A673 (cell line): ENCODE measurements at regions of chr2 and their contacts with region 1.

Region 1: GRCh38 chr2:25558262-25558661 is 115.1 kb downstream of the DTNB start:
- DNase-seq: peak; percentile 86
- H3K4me3 ChIP-seq: no peak overlapping the region
- H3K27ac ChIP-seq: peak overlapping the region; percentile 42
- H3K4me1 ChIP-seq: peaks cover 20% of the 10 kb centered on the region
- H3K27me3 ChIP-seq: no peaks in the 10 kb centered on the region
- CTCF ChIP-seq: no peak; the same call in 1 of the 2 replicates

Region 2: DNA sequence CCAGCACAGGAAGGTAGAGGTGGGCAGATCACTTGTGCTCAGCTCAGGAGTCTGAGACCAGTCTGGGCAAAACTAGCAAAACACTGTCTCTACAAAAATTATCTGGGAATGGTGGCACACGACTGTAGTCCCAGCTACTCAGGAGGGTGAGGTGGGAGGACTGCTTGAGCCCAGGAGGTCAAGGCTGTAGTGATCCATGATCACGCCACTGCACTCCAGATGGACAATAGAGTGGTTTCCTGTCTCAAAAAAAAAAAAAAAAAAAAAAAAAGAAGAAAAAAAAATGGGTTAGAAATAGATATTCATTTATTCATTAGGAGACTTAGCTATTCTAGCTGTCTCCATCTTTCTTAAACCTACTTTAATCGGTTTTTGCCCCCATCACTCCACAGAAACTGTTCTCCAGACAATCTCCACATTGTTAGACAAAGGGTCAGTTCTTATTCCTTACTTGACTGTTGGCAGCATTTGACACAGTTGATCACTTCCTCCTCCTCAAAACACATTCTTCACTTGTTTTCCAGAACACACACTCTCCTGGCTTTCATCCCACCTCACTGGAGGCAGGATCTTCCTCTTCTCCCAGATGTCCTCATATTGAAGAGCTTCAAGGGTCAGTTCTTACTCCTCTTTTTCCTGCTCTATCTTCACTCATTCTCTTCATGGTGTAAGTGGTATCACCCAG is 12.0 kb after region 1 on chr2:
- CTCF ChIA-PET with region 1: interaction called, 18 read pairs
- POLR2A ChIA-PET with region 1: no interaction called
- intact Hi-C with region 1: no loop called
- DNase-seq: no peak
- H3K4me3 ChIP-seq: no peak overlapping the region
- H3K27ac ChIP-seq: no peak overlapping the region
- H3K4me1 ChIP-seq: peaks cover 8% of the 10 kb centered on the region
- H3K27me3 ChIP-seq: no peaks in the 10 kb centered on the region
- CTCF ChIP-seq: no peak